CD4-positive, alpha-beta T cell (primary cell): ENCODE measurements at regions of chr13 and their contacts with region 1.

Region 1: DNA sequence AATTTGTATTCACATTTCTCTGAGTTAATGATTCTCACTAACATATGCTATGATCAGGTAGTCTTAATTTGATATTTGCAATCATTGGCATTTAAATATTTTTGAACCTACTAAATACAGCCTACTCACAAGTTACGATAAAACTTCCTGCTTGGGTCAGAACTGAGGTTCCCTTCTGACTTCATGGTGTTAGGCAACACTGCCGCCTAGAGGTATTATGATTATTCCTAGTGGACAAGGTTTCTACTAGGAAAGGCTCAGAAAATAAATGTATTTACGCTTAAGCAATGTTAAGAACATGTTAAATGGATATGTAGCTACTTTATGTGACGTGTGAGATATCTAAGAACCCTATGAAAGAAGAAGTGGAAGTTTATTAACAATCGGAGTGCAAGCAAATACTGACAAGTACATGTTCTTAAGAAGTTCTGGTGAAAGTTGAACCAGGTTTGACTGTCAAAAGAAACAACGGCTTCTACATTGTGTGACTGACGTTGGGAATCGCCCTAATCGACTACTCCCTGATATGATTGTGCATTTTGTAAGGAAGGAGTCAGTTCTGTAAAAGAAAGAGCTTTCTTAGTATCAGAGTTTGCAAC is 1395.8 kb downstream of the SLITRK5 start:
- DNase-seq: peak in 7 of 14 experiments; percentile 2 to 34 (median 6)
- ATAC-seq: no peak
- H3K4me3 ChIP-seq: no peak overlapping the region
- H3K4me3 Mint-ChIP-seq: no peak overlapping the region
- H3K27ac ChIP-seq: no peak overlapping the region
- H3K27ac Mint-ChIP-seq: no peak overlapping the region
- H3K4me1 ChIP-seq: no peaks in the 10 kb centered on the region
- H3K4me1 Mint-ChIP-seq: no peaks in the 10 kb centered on the region
- H3K27me3 ChIP-seq: no peaks in the 10 kb centered on the region
- H3K27me3 Mint-ChIP-seq: no peaks in the 10 kb centered on the region
- CTCF ChIP-seq: peak; percentile 59

Region 2: DNA sequence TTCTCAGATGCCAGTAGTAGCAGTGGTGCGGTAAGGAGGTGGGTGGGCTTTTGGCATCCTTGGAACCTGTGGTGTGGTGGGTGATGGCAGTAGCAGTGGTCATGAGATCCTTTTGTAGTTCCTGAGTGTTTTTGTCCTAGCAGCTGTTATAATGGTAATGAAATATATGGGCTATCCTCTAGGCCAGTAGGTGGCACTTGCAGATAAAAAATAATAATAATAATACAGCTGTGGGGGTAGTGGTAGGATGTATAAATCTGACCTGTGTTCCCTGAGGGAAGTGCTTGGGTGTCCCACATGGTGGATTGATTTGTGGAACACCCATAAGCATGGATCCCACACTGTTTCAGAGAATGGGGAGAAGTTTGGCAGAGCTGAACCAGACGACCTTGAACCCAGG is 1061.8 kb before region 1 on chr13:
- CTCF ChIA-PET with region 1: no interaction called
- POLR2A ChIA-PET with region 1: no interaction called
- intact Hi-C with region 1: loop called (anchors 5 to 10 kb)
- DNase-seq: no peak
- ATAC-seq: no peak
- H3K4me3 ChIP-seq: no peak overlapping the region
- H3K4me3 Mint-ChIP-seq: no peak overlapping the region
- H3K27ac ChIP-seq: no peak overlapping the region
- H3K27ac Mint-ChIP-seq: no peak overlapping the region
- H3K4me1 ChIP-seq: no peaks in the 10 kb centered on the region
- H3K4me1 Mint-ChIP-seq: no peaks in the 10 kb centered on the region
- H3K27me3 ChIP-seq: no peaks in the 10 kb centered on the region
- H3K27me3 Mint-ChIP-seq: no peaks in the 10 kb centered on the region
- CTCF ChIP-seq: no peak